ENCODE measurements at regions of chr9 and their contacts with region 1.

Region 1: GRCh38 chr9:16044579-16044881 is 491.7 kb downstream of the CCDC171 start:
- DNase-seq: no peak
- ATAC-seq: no peak

Region 2: GRCh38 chr9:16103620-16104397 is 59.3 kb after region 1 on chr9:
- intact Hi-C with region 1: loop called (anchors 2 kb)
- DNase-seq: no peak
- ATAC-seq: no peak

Measured in Right ventricle myocardium inferior (tissue), 1 donor.